WTC11 (cell line): ENCODE measurements at regions of chr11 and their contacts with region 1.

Region 1: GRCh38 chr11:73335204-73335923 is 27.3 kb downstream of the ARHGEF17 start:
- DNase-seq: peak; percentile 94
- ATAC-seq: peak; percentile 38
- H3K4me3 Mint-ChIP-seq: no peak overlapping the region
- H3K27ac Mint-ChIP-seq: no peak overlapping the region
- H3K4me1 Mint-ChIP-seq: peaks cover 50% of the 10 kb centered on the region
- H3K27me3 Mint-ChIP-seq: peaks cover 64% of the 10 kb centered on the region
- CTCF ChIP-seq: peak; percentile 95

Region 2: DNA sequence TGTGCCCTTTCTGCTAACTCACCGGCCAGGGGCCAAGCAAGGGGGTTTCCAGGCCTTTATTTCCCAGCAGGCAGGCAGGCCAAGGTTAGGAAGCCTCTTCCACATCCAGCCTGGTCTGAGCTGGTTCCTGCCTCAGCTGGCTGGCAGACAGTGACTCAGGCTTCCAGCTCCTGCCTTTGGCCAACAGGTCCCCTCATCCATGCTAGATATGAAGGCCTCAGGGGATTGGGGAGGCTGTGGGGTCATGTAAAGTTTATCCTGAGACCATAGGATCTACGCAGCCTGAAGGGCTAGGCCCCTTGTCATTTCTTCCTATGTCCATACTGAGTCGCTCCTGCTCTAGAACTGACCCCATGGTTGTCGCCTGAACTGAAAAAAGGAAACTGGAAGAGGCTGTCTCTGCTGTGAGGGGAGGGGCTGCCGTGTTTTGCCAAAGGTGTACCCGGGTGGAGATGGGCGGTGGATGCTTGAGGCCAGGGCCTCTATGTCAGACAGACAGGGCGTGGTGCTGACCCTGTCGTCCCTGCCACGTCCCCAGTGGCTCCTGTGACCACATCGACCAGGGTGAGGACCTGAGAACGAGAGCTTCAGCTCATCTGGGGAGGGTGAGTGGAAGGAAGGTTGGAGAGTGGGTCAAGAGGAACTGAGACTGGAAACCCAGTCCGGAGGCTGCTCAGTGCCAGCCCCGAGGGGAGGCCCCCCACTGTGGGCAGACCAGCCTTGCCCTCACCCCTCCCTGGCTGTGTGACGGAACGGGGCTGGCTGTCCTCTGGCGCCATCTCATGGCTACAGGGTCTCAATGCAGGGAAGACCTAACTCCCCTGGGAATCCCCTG is 46.3 kb before region 1 on chr11:
- CTCF ChIA-PET with region 1: interaction called, 21 read pairs
- POLR2A ChIA-PET with region 1: no interaction called
- DNase-seq: peak; percentile 85
- ATAC-seq: peak; percentile 85
- H3K4me3 Mint-ChIP-seq: no peak overlapping the region
- H3K27ac Mint-ChIP-seq: no peak overlapping the region
- H3K4me1 Mint-ChIP-seq: peaks cover 9% of the 10 kb centered on the region
- H3K27me3 Mint-ChIP-seq: peaks cover 9% of the 10 kb centered on the region
- CTCF ChIP-seq: peak; percentile 81

Region 3: GRCh38 chr11:73314117-73314961 is 21.0 kb before region 1 on chr11:
- CTCF ChIA-PET with region 1: interaction called, 270 read pairs
- POLR2A ChIA-PET with region 1: interaction called, 23 read pairs
- DNase-seq: peak; percentile 28
- ATAC-seq: peak; percentile 46
- H3K4me3 Mint-ChIP-seq: no peak overlapping the region
- H3K27ac Mint-ChIP-seq: no peak overlapping the region
- H3K4me1 Mint-ChIP-seq: peaks cover 27% of the 10 kb centered on the region
- H3K27me3 Mint-ChIP-seq: peaks cover 20% of the 10 kb centered on the region
- CTCF ChIP-seq: no peak

Region 4: GRCh38 chr11:73376160-73376802 is 40.9 kb after region 1 on chr11 and contains the start of gene RELT:
- CTCF ChIA-PET with region 1: interaction called, 11 read pairs
- POLR2A ChIA-PET with region 1: no interaction called
- DNase-seq: peak; percentile 93
- ATAC-seq: peak; percentile 95
- H3K4me3 Mint-ChIP-seq: peak within 1 kb of the TSS; percentile 70
- H3K27ac Mint-ChIP-seq: no peak within 1 kb of the TSS
- H3K4me1 Mint-ChIP-seq: peaks cover 12% of the 10 kb centered on the region
- H3K27me3 Mint-ChIP-seq: peaks cover 16% of the 10 kb centered on the region
- CTCF ChIP-seq: peak; percentile 71
- total RNA-seq, gene RELT: 5.7 to 6.7 TPM (median 5.9 TPM) in 3 replicates